Cardiac septum (tissue), 1 donor: ENCODE measurements at regions of chr11 and their contacts with region 1.

Region 1: GRCh38 chr11:69636312-69637197 is 4.4 kb upstream of the CCND1 start:
- DNase-seq: peak; percentile 86

Region 2: DNA sequence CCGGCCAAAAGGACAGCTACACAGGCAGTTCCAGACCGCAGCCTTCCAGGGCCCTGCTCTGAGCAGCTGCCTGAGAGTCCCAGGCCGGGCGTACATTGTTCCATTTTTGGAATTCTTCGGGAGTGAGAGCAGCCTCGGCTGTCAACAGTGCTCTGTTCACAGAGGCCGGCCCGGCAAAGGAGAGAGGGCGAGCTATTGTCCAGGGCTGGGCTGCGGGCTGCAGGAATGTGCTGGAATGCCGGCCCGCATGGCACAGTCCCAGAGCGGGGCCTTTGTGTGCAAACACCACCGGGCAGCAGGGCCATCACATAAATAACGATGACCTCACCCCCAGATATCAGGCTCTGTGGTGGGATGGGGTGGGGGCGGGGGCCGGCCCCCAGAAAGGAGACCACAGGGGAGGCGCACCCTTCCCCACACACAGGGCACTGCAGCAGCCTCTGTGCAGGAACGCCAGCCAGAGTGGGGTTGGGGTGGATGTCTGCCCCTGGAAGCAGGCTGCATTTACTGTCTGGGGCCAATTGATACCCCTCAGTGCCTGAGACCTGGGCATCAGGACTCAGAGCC is 139.3 kb before region 1 on chr11:
- intact Hi-C with region 1: loop called (anchors 2 kb)
- DNase-seq: peak; percentile 90